Activated B cell treated with CpG ODN at 0.5 μM for 24 hours (primary cell): ENCODE measurements at regions of chr17 and their contacts with region 1.

Region 1: GRCh38 chr17:2828397-2829038 is 32.3 kb downstream of the RAP1GAP2 start:
- DNase-seq: peak; percentile 84
- ATAC-seq: peak; percentile 84
- H3K4me3 Mint-ChIP-seq: no peak overlapping the region
- H3K27ac Mint-ChIP-seq: no peak overlapping the region
- H3K4me1 Mint-ChIP-seq: peaks cover 42% of the 10 kb centered on the region
- H3K27me3 Mint-ChIP-seq: peaks cover 2% of the 10 kb centered on the region
- CTCF ChIP-seq: peak; percentile 97

Region 2: GRCh38 chr17:2680961-2681360 is 147.6 kb before region 1 on chr17:
- CTCF ChIA-PET with region 1: no interaction called
- POLR2A ChIA-PET with region 1: no interaction called
- intact Hi-C with region 1: no loop called
- DNase-seq: no peak
- ATAC-seq: no peak
- H3K4me3 Mint-ChIP-seq: no peak overlapping the region
- H3K27ac Mint-ChIP-seq: no peak overlapping the region
- H3K4me1 Mint-ChIP-seq: no peaks in the 10 kb centered on the region
- H3K27me3 Mint-ChIP-seq: no peaks in the 10 kb centered on the region
- CTCF ChIP-seq: no peak

Region 3: GRCh38 chr17:2711601-2712299 is 116.8 kb before region 1 on chr17 and contains the start of gene CLUH:
- CTCF ChIA-PET with region 1: no interaction called
- POLR2A ChIA-PET with region 1: no interaction called
- intact Hi-C with region 1: loop called (anchors 10 kb)
- DNase-seq: peak; percentile 96
- ATAC-seq: peak; percentile 83
- H3K4me3 Mint-ChIP-seq: peak within 1 kb of the TSS; percentile 90
- H3K27ac Mint-ChIP-seq: peak within 1 kb of the TSS; percentile 83
- H3K4me1 Mint-ChIP-seq: peaks cover 37% of the 10 kb centered on the region
- H3K27me3 Mint-ChIP-seq: no peaks in the 10 kb centered on the region
- CTCF ChIP-seq: no peak
- total RNA-seq, gene CLUH: 101 and 115 TPM in 2 replicates

Region 4: DNA sequence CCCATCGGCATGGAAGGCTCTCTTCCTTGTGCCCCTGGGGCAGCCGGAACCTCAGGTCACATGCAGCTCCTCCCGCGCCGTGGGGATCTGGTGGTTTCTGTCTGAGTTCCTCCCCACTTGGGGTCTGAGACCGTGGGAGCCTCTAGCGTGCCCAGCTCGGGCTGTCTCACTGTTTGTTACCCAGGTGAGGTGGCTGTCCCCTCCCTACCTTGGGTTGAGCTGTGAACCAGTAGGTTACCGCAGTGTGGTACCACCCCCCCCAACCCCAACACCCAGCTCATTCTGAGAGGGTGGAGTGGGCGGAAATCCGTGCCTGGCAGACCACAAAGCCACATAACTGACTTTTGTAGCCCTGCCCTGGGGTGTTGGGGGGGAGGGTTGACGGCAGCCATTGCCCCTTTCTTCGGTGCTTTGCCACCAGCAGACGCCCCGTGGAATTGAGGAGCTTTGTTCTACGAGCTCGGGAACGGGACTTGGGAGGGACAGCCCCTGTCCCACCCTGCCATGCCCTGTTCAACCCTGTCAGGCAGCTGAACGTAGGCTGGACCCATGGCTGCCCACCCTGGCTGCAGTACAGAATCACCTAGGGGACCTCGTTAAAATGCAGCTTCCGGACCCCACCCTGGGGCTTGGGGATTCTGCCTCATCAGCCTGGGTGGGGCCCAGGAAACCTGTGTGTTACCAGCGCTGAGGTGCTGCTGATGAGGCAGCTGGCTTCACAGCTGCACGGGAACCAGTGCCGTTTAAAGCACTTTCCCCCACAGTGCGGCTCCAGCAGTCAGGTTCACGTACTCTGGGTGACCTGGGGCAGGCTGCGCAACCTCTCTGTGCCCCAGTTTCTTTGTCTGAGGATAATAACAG is 13.8 kb before region 1 on chr17:
- CTCF ChIA-PET with region 1: interaction called, 13 read pairs
- POLR2A ChIA-PET with region 1: interaction called, 25 read pairs
- intact Hi-C with region 1: loop called (anchors 1 kb)
- DNase-seq: peak; percentile 67
- ATAC-seq: peak; percentile 84
- H3K4me3 Mint-ChIP-seq: peak overlapping the region; percentile 64
- H3K27ac Mint-ChIP-seq: peak overlapping the region; percentile 73
- H3K4me1 Mint-ChIP-seq: peaks cover 46% of the 10 kb centered on the region
- H3K27me3 Mint-ChIP-seq: no peaks in the 10 kb centered on the region
- CTCF ChIP-seq: no peak

Region 5: GRCh38 chr17:2847381-2848333 is 19.1 kb after region 1 on chr17:
- CTCF ChIA-PET with region 1: interaction called, 12 read pairs
- POLR2A ChIA-PET with region 1: no interaction called
- intact Hi-C with region 1: no loop called
- DNase-seq: no peak
- ATAC-seq: no peak
- H3K4me3 Mint-ChIP-seq: no peak overlapping the region
- H3K27ac Mint-ChIP-seq: no peak overlapping the region
- H3K4me1 Mint-ChIP-seq: peaks cover 15% of the 10 kb centered on the region
- H3K27me3 Mint-ChIP-seq: peaks cover 31% of the 10 kb centered on the region
- CTCF ChIP-seq: no peak

Region 6: DNA sequence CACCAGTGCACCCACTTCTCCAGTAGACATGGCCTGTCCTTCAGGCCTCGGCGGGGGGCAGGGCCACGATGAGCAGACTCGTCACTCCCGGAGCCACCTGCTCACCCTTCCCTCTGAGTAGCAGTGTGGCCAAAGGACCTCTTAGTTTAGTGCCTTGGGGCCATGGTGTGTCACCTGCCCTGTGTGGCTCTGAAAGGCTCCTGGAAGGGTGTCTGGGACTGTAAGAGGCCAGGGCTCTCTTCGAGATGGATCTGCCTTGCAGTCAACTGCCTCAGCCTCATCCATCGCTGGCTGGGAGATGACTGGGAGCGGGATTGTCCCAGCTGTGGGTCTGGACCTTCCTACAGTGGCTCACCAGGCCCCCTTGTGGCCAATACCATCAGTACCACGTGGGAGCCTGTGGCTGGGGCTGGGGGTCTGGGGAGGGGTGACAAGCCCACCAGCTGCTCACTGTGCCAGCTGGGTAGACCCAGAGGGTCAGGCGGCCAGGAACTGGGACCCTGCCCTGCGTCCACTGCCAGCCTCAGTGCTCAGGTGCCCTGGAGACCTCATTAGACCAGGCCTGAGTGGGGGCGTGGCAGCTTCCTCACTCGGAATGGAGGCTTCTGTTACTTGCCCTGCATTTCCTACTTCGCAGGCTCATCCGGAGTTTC is 101.5 kb after region 1 on chr17:
- CTCF ChIA-PET with region 1: interaction called, 3 read pairs
- POLR2A ChIA-PET with region 1: no interaction called
- intact Hi-C with region 1: loop called (anchors 5 kb)
- DNase-seq: peak; percentile 36
- ATAC-seq: peak; percentile 54
- H3K4me3 Mint-ChIP-seq: no peak overlapping the region
- H3K27ac Mint-ChIP-seq: no peak overlapping the region
- H3K4me1 Mint-ChIP-seq: peaks cover 25% of the 10 kb centered on the region
- H3K27me3 Mint-ChIP-seq: no peaks in the 10 kb centered on the region
- CTCF ChIP-seq: no peak

Region 7: GRCh38 chr17:2965563-2966235 is 137.2 kb after region 1 on chr17:
- CTCF ChIA-PET with region 1: no interaction called
- POLR2A ChIA-PET with region 1: no interaction called
- intact Hi-C with region 1: no loop called
- DNase-seq: no peak
- ATAC-seq: no peak
- H3K4me3 Mint-ChIP-seq: no peak overlapping the region
- H3K27ac Mint-ChIP-seq: no peak overlapping the region
- H3K4me1 Mint-ChIP-seq: no peaks in the 10 kb centered on the region
- H3K27me3 Mint-ChIP-seq: no peaks in the 10 kb centered on the region
- CTCF ChIP-seq: no peak

Region 8: GRCh38 chr17:3048767-3049471 is 220.4 kb after region 1 on chr17:
- CTCF ChIA-PET with region 1: no interaction called
- POLR2A ChIA-PET with region 1: no interaction called
- intact Hi-C with region 1: no loop called
- DNase-seq: peak; percentile 80
- ATAC-seq: peak; percentile 98
- H3K4me3 Mint-ChIP-seq: peak overlapping the region; percentile 92
- H3K27ac Mint-ChIP-seq: peak overlapping the region; percentile 83
- H3K4me1 Mint-ChIP-seq: peaks cover 8% of the 10 kb centered on the region
- H3K27me3 Mint-ChIP-seq: no peaks in the 10 kb centered on the region
- CTCF ChIP-seq: no peak